ENCODE measurements at regions of chr16 and their contacts with region 1.

Region 1: DNA sequence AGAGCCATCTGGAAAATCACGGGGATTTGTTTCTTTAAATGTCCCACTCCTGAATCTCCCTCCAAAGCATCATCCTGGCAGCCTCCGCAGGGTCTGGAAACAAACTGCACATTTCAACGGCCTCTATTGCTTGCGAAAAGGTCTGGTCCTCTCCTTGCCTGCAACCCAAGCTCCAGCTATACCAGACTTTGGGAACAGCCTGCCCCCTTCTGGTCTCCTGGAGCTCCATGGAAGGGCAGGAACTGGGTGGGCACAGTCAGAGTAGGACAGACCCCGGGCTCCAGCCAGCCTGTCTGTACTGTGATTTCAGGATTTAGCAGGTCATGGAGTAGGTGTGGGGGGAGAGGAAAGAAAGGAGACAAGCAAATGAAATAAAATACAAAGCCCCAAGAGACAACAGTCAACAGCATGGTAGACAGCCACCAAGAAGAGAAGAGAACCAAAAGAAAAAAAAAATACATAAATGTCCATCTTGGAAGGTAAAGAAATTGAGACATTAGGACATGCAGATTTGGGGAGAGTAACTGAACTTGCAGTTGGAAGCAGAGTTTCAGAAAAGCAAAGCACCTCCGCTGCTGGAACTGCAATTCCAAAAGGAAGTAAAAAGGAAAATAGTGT is 2.7 kb downstream of the XYLT1 start:
- DNase-seq: no peak
- H3K4me3 ChIP-seq: peak overlapping the region; percentile 73; the same call in 1 of the 2 replicates
- H3K27me3 ChIP-seq: no peaks in the 10 kb centered on the region
- CTCF ChIP-seq: peak; percentile 92

Region 2: DNA sequence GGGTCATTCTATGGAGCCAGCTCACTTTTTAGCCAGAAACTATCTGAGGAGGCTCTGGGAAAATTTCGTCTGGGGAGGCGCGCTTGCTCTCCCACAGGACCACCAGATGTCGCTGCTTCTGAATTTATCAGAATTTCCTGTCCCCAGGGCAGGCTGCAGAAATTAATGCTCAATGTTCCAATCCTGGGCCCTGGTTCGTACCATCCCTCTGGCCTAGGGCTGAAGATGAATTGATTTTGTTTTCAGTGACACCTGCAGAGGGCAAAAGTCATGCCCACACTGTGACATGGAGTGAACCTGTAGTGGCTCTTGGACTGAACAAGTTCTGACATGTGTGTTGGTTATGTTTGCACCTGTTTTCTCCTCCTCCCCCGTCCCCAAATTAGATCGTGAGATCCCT is 606.5 kb before region 1 on chr16:
- CTCF ChIA-PET with region 1: interaction called, 14 read pairs
- POLR2A ChIA-PET with region 1: no interaction called
- DNase-seq: no peak
- H3K4me3 ChIP-seq: no peak overlapping the region
- H3K27me3 ChIP-seq: no peaks in the 10 kb centered on the region; the same call in 1 of the 2 replicates
- CTCF ChIP-seq: peak; percentile 74

Region 3: DNA sequence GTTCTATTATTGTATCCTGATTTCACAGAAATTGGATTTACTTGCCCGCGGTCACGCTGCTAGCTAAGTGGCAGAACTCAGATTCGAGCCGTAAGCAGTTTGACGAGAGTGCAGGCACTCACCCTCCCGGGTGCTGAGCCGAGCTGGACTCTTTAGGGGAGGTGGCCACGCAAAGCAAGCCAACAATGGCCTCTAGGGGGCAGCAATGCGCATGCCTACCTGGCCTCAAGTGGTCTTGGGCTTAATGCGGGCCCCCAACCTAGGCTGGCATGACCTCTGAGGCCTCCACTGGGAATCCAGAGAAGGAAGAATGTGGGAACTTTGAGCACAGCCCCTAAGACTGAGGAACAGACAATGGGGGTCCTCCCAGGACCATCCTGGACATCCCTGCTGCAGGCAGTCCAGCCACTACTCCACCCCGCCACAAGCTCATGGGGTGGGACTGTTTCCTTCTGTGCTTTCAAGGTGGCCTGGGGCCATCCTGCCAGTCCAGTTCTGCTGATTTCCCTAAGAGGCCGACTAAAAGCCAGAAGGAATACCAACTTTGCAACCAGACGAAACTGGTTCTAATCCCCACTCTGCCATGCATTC is 273.7 kb before region 1 on chr16:
- CTCF ChIA-PET with region 1: interaction called, 32 read pairs
- POLR2A ChIA-PET with region 1: interaction called, 3 read pairs
- DNase-seq: no peak
- H3K4me3 ChIP-seq: no peak overlapping the region
- H3K27me3 ChIP-seq: no peaks in the 10 kb centered on the region
- CTCF ChIP-seq: peak; percentile 85

Region 4: GRCh38 chr16:17205279-17206211 is 262.5 kb before region 1 on chr16:
- CTCF ChIA-PET with region 1: interaction called, 13 read pairs
- POLR2A ChIA-PET with region 1: no interaction called
- DNase-seq: peak; percentile 71
- H3K4me3 ChIP-seq: no peak overlapping the region
- H3K27me3 ChIP-seq: no peaks in the 10 kb centered on the region
- CTCF ChIP-seq: no peak

Region 5: GRCh38 chr16:17275076-17276008 is 192.7 kb before region 1 on chr16:
- CTCF ChIA-PET with region 1: interaction called, 7 read pairs
- POLR2A ChIA-PET with region 1: interaction called, 10 read pairs
- DNase-seq: no peak
- H3K4me3 ChIP-seq: no peak overlapping the region
- H3K27me3 ChIP-seq: no peaks in the 10 kb centered on the region
- CTCF ChIP-seq: no peak

Region 6: GRCh38 chr16:17397499-17397891 is 70.5 kb before region 1 on chr16:
- CTCF ChIA-PET with region 1: interaction called, 3 read pairs
- POLR2A ChIA-PET with region 1: interaction called, 18 read pairs
- DNase-seq: no peak
- H3K4me3 ChIP-seq: no peak overlapping the region
- H3K27me3 ChIP-seq: no peaks in the 10 kb centered on the region
- CTCF ChIP-seq: no peak

Region 7: GRCh38 chr16:17511340-17511739 is 43.3 kb after region 1 on chr16:
- CTCF ChIA-PET with region 1: no interaction called
- POLR2A ChIA-PET with region 1: no interaction called
- DNase-seq: peak; percentile 87
- H3K4me3 ChIP-seq: no peak overlapping the region
- H3K27me3 ChIP-seq: no peaks in the 10 kb centered on the region
- CTCF ChIP-seq: no peak

Region 8: DNA sequence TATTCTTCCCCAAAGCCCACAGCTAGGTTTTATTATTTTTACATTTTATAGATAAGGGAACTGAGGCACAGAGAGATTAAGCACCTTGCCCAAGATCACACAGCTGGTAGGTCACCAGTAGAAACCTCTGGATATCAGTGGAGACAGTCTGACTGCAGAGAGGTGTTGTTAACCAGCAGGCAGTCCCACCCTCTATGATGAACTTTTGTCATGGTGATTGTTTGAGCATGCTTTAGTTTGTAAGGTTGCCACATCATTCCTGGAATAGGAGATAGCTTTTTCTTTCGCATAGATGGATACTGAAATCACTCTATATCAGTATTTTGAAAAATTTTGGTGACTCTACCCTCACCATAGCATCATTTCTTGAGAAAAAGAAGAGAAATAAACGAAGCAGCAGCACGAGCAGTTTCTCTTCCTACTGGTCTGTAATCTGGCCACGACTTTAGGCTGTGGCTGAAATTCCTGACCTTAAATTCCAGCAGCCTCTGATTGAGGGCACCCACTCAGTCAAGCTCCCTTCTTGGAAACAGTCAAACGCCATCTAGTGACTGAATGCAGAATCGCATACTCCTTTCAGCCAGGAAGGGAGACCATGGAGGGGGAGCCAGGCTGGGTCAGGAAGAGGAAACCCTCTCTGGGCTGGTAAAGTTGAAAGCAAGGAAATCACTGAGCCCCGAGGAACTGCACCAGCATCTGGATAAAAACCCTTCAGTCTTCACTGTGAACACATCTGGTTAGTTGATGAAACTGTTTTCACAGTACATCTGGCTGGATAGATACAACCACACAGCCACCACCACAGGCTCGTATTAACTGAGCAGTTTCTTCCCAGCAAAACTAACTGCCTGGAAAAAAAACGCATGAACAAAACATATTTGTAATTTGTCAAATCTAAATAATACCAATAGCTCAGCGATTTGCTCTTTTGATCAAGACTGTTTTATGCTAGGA is 111.2 kb after region 1 on chr16:
- CTCF ChIA-PET with region 1: interaction called, 133 read pairs
- POLR2A ChIA-PET with region 1: no interaction called
- DNase-seq: peak; percentile 40
- H3K4me3 ChIP-seq: no peak overlapping the region
- H3K27me3 ChIP-seq: 0 out of 2 replicates have a peak, but pooled peaks cover 1% of the 10 kb centered on the region
- CTCF ChIP-seq: peak; percentile 96

Measured in BJ (cell line).